OCI-LY7 (cell line): ENCODE measurements at regions of chr18 and their contacts with region 1.

Region 1: GRCh38 chr18:13813271-13813849 is 10.6 kb upstream of the MC5R start:
- DNase-seq: peak; percentile 64
- H3K4me3 ChIP-seq: no peak overlapping the region
- H3K27ac ChIP-seq: no peak overlapping the region
- H3K4me1 ChIP-seq: no peaks in the 10 kb centered on the region
- CTCF ChIP-seq: peak; percentile 93

Region 2: DNA sequence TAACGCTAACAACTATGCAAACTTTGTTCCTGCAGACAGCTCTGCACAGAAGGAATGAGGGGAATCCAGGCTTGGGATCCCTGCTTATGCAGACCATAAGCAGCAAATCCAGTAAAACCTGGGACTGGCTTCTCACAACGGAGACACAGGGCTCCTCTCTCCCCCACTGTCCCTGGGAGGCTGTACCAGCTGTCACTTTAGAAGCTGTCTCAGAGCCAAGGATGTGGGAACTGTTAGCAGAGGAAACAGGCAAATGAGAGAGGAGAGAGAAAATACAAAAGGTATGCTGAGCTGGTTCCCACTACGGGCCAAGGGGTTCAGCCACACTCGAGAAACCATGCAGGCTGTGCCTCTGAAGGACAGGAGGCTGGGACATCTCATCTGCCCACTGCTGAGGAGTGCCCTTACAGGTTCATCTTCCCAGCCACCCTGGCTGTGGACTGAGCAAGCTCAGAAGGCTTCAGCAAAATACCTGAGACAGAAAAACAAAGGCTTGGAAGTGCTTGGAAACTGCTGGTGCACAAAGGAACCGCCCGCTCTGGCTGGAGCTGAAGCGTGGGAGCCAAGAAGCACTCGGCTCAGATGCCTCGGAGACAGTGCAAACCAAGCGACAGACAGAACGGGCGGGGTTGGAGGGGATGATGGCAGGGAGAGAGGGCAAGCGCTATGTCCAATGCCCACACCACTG is 159.5 kb before region 1 on chr18:
- CTCF ChIA-PET with region 1: no interaction called
- POLR2A ChIA-PET with region 1: no interaction called
- intact Hi-C with region 1: no loop called
- DNase-seq: no peak
- H3K4me3 ChIP-seq: no peak overlapping the region
- H3K27ac ChIP-seq: no peak overlapping the region
- H3K4me1 ChIP-seq: no peaks in the 10 kb centered on the region
- CTCF ChIP-seq: no peak

Region 3: GRCh38 chr18:14026199-14026598 is 212.8 kb after region 1 on chr18:
- CTCF ChIA-PET with region 1: no interaction called
- POLR2A ChIA-PET with region 1: no interaction called
- intact Hi-C with region 1: loop called (anchors 10 kb)
- DNase-seq: no peak
- H3K4me3 ChIP-seq: no peak overlapping the region
- H3K27ac ChIP-seq: no peak overlapping the region
- H3K4me1 ChIP-seq: no peaks in the 10 kb centered on the region
- CTCF ChIP-seq: no peak

Region 4: DNA sequence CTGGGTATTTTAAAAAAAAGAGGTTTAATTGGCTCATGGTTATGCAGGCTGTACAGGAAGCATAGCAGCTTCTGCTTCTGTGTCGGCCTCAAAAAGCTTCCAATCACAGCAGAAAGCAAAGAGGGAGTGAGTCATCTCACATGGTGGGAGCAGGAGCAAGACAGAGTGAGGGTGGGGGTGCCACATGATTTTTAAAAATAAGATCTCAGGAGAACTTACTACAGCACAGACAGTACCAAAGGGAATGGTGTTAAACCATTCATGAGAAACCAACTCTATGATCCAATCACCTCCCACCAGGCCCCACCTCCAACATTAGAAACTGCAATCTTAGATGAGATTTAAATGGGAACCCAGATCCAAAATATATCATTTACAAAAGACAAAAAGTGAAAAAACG is 304.2 kb after region 1 on chr18:
- CTCF ChIA-PET with region 1: no interaction called
- POLR2A ChIA-PET with region 1: no interaction called
- intact Hi-C with region 1: no loop called
- DNase-seq: no peak
- H3K4me3 ChIP-seq: no peak overlapping the region
- H3K27ac ChIP-seq: no peak overlapping the region
- H3K4me1 ChIP-seq: no peaks in the 10 kb centered on the region
- CTCF ChIP-seq: no peak

Region 5: GRCh38 chr18:14179305-14179704 is 365.9 kb after region 1 on chr18:
- CTCF ChIA-PET with region 1: no interaction called
- POLR2A ChIA-PET with region 1: no interaction called
- intact Hi-C with region 1: loop called (anchors 10 kb)
- DNase-seq: peak; percentile 40
- H3K4me3 ChIP-seq: peak overlapping the region; percentile 72
- H3K27ac ChIP-seq: peak overlapping the region; percentile 43
- H3K4me1 ChIP-seq: no peaks in the 10 kb centered on the region
- CTCF ChIP-seq: no peak